ENCODE measurements at regions of chr5 and their contacts with region 1.

Region 1: GRCh38 chr5:43484106-43484849 is 613 bp upstream of the TMEM267 start:
- DNase-seq: peak; percentile 85 to 89 (median 87)
- H3K4me3 ChIP-seq: peak overlapping the region; percentile 50 to 59
- H3K4me3 Mint-ChIP-seq: peak overlapping the region; percentile 96 to 99 (median 98)
- H3K27ac ChIP-seq: peak overlapping the region; percentile 92
- H3K27ac Mint-ChIP-seq: peak overlapping the region; percentile 98 to 100 (median 100)
- H3K4me1 ChIP-seq: peaks cover 40% of the 10 kb centered on the region
- H3K4me1 Mint-ChIP-seq: peaks cover 21 to 57% (median 31%) of the 10 kb centered on the region in 4 donors
- H3K27me3 ChIP-seq: no peaks in the 10 kb centered on the region
- H3K27me3 Mint-ChIP-seq: no peaks in the 10 kb centered on the region

Region 2: GRCh38 chr5:41924872-41925554 is 1559.3 kb before region 1 on chr5 and contains the start of gene FBXO4:
- CTCF ChIA-PET with region 1: interaction called, 3 read pairs
- POLR2A ChIA-PET with region 1: interaction called, 15 read pairs
- intact Hi-C with region 1: no loop called
- DNase-seq: peak; percentile 89 to 93 (median 91)
- H3K4me3 ChIP-seq: peak within 1 kb of the TSS; percentile 83 to 95
- H3K4me3 Mint-ChIP-seq: peak within 1 kb of the TSS; percentile 81 to 91 (median 89)
- H3K27ac ChIP-seq: peak within 1 kb of the TSS; percentile 93
- H3K27ac Mint-ChIP-seq: peak within 1 kb of the TSS; percentile 81 to 100 (median 98)
- H3K4me1 ChIP-seq: peaks cover 25% of the 10 kb centered on the region
- H3K4me1 Mint-ChIP-seq: peaks cover 10 to 33% (median 22%) of the 10 kb centered on the region in 4 donors
- H3K27me3 ChIP-seq: no peaks in the 10 kb centered on the region
- H3K27me3 Mint-ChIP-seq: no peaks in the 10 kb centered on the region
- total RNA-seq, gene FBXO4: 15.1 to 18.2 TPM

Region 3: GRCh38 chr5:43008369-43009153 is 475.7 kb before region 1 on chr5:
- CTCF ChIA-PET with region 1: interaction called, 5 read pairs
- POLR2A ChIA-PET with region 1: interaction called, 41 read pairs
- intact Hi-C with region 1: no loop called
- DNase-seq: peak; percentile 89 to 92 (median 90)
- H3K4me3 ChIP-seq: peak overlapping the region; percentile 66 to 84
- H3K4me3 Mint-ChIP-seq: peak overlapping the region; percentile 84 to 94 (median 91)
- H3K27ac ChIP-seq: peak overlapping the region; percentile 85
- H3K27ac Mint-ChIP-seq: peak overlapping the region; percentile 90 to 99 (median 97)
- H3K4me1 ChIP-seq: peaks cover 38% of the 10 kb centered on the region
- H3K4me1 Mint-ChIP-seq: peaks cover 19 to 48% (median 33%) of the 10 kb centered on the region in 4 donors
- H3K27me3 ChIP-seq: no peaks in the 10 kb centered on the region
- H3K27me3 Mint-ChIP-seq: no peaks in the 10 kb centered on the region

Region 4: GRCh38 chr5:43105369-43106289 is 378.6 kb before region 1 on chr5:
- CTCF ChIA-PET with region 1: interaction called, 15 read pairs
- POLR2A ChIA-PET with region 1: interaction called, 9 read pairs
- intact Hi-C with region 1: loop called (anchors 1 kb)
- DNase-seq: peak; percentile 87 to 90 (median 88)
- H3K4me3 ChIP-seq: peak overlapping the region; percentile 62 to 87
- H3K4me3 Mint-ChIP-seq: peak overlapping the region; percentile 85 to 94 (median 88)
- H3K27ac ChIP-seq: peak overlapping the region; percentile 44
- H3K27ac Mint-ChIP-seq: peak overlapping the region; percentile 84 to 94 (median 92)
- H3K4me1 ChIP-seq: peaks cover 43% of the 10 kb centered on the region
- H3K4me1 Mint-ChIP-seq: peaks cover 28 to 45% (median 37%) of the 10 kb centered on the region in 4 donors
- H3K27me3 ChIP-seq: no peaks in the 10 kb centered on the region
- H3K27me3 Mint-ChIP-seq: no peaks in the 10 kb centered on the region

Region 5: DNA sequence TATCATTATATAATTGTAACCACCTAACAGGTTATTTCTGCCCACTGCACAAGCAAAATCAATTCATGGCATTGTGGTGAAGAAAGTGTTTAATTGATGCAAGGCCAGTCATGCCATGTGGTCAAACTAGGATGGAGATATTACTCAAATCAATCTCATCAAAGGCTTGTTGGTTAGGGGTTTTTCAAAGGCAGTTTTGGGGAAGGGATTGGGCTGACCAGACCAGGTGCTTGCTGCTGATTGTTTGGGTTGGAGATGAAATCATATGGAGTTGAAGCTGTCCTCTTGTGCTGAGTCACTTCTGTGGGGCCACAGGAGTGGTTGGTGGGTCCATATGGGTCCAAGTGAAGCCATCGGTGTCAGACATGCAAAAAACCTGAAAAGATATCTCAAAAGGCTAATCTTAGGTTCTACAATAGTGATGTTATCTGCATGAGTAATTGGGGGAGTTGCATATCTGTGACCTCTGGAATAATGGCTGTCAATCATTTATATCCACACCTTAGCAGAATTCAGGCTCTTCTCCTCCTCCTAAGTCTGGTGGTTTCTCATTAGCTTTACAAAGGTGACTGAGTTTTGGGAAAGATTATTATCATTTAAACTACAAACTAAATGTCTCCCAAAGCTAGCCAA is 216.0 kb before region 1 on chr5:
- CTCF ChIA-PET with region 1: no interaction called
- POLR2A ChIA-PET with region 1: no interaction called
- intact Hi-C with region 1: no loop called
- DNase-seq: no peak
- H3K4me3 ChIP-seq: no peak overlapping the region
- H3K4me3 Mint-ChIP-seq: no peak overlapping the region
- H3K27ac ChIP-seq: no peak overlapping the region
- H3K27ac Mint-ChIP-seq: no peak overlapping the region
- H3K4me1 ChIP-seq: no peaks in the 10 kb centered on the region
- H3K4me1 Mint-ChIP-seq: peaks cover 0 to 5% (median 0%) of the 10 kb centered on the region in 4 donors
- H3K27me3 ChIP-seq: no peaks in the 10 kb centered on the region
- H3K27me3 Mint-ChIP-seq: peaks cover 18 to 25% of the 10 kb centered on the region in 2 donors

Region 6: DNA sequence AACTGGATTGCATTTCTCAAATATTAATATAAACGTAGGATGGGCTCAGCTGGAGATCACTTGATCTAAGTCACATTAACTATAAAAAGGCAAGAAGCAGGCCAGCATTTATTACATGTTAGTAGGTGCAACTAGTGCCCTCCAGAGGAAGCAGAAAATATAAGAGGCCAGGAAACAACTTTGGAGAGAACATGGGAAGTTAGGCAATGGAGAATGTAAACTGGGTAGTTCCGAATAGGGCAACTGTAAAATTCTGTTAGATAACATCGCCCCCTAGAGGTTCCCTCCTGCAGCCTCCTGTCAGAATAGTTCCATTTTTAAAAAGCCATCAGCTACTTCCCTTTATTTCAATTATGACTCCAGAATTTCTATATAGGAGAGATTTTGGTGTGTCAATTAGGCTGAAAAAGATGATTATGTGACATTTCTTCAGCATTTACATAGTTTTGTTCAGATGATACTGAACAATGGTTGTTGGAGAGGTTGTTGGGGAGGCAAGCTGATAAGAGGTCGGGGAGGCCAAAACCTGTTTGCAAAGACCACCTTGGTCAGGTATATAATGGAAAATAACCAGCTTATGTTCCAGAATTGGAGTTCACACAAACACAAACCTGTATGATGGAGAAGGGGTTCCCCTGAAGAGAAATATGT is 94.5 kb before region 1 on chr5:
- CTCF ChIA-PET with region 1: interaction called, 26 read pairs
- POLR2A ChIA-PET with region 1: interaction called, 20 read pairs
- intact Hi-C with region 1: no loop called
- DNase-seq: peak; percentile 45 to 56 (median 53)
- H3K4me3 ChIP-seq: no peak overlapping the region
- H3K4me3 Mint-ChIP-seq: no peak overlapping the region
- H3K27ac ChIP-seq: no peak overlapping the region
- H3K27ac Mint-ChIP-seq: peak overlapping the region in 3 of 7 donors; percentile 0 to 47 (median 31)
- H3K4me1 ChIP-seq: peaks cover 11% of the 10 kb centered on the region
- H3K4me1 Mint-ChIP-seq: peaks cover 6 to 30% (median 21%) of the 10 kb centered on the region in 4 donors
- H3K27me3 ChIP-seq: no peaks in the 10 kb centered on the region
- H3K27me3 Mint-ChIP-seq: no peaks in the 10 kb centered on the region

Region 7: GRCh38 chr5:43497311-43498104 is 13.2 kb after region 1 on chr5:
- CTCF ChIA-PET with region 1: interaction called, 7 read pairs
- POLR2A ChIA-PET with region 1: interaction called, 23 read pairs
- intact Hi-C with region 1: no loop called
- DNase-seq: no peak
- H3K4me3 ChIP-seq: no peak overlapping the region
- H3K4me3 Mint-ChIP-seq: peak overlapping the region; percentile 2 to 83 (median 62)
- H3K27ac ChIP-seq: no peak overlapping the region
- H3K27ac Mint-ChIP-seq: peak overlapping the region in 5 of 7 donors; percentile 38 to 85 (median 55)
- H3K4me1 ChIP-seq: no peaks in the 10 kb centered on the region
- H3K4me1 Mint-ChIP-seq: no peaks in the 10 kb centered on the region
- H3K27me3 ChIP-seq: no peaks in the 10 kb centered on the region
- H3K27me3 Mint-ChIP-seq: no peaks in the 10 kb centered on the region

Region 8: DNA sequence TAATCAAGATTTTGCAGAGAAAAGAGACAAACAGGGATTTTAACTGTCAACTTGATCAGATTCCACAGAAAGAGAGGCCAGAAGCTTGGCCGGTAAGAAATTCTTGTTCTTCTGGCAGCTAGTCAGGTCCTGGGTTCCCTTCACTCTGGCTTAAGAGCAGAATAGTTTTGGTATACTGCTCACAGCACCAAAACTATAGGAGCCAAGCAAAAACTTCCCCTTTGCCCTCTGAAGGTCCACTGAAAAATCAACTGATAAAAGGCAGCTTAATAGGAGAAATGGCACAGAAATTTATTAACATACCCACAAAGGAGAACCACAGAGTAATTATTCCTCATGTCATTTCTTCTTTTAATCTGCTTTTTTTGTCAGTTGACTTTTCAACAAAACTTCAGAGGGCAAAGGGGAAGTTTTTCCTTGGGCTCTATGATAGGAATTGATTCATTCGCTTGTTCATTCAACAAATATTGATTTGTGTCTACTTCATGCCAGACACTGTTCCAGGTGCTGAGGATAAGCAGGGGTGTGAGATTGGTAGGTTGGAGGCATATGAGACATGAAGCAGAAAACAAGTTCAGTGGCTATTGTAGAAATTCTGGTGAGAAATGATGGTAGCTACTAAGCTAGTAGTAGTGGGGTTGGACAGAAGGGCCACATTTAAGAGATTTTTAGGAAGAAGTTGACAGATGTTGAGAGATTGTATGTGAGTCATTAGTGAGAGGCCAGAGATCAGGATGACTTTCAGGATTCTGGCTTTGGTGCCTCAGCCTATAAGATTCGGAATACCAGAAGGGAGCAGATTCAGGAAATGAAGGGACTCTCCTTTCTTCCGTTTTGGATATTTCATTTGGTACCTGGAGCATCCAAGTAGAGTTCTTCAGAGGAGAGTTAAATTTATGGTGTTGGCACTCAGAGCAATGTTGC is 98.1 kb after region 1 on chr5:
- CTCF ChIA-PET with region 1: no interaction called
- POLR2A ChIA-PET with region 1: no interaction called
- intact Hi-C with region 1: no loop called
- DNase-seq: no peak
- H3K4me3 ChIP-seq: no peak overlapping the region
- H3K4me3 Mint-ChIP-seq: no peak overlapping the region
- H3K27ac ChIP-seq: no peak overlapping the region
- H3K27ac Mint-ChIP-seq: peak overlapping the region in 1 of 7 donors; percentile 39
- H3K4me1 ChIP-seq: no peaks in the 10 kb centered on the region
- H3K4me1 Mint-ChIP-seq: no peaks in the 10 kb centered on the region
- H3K27me3 ChIP-seq: no peaks in the 10 kb centered on the region
- H3K27me3 Mint-ChIP-seq: no peaks in the 10 kb centered on the region

Region 9: DNA sequence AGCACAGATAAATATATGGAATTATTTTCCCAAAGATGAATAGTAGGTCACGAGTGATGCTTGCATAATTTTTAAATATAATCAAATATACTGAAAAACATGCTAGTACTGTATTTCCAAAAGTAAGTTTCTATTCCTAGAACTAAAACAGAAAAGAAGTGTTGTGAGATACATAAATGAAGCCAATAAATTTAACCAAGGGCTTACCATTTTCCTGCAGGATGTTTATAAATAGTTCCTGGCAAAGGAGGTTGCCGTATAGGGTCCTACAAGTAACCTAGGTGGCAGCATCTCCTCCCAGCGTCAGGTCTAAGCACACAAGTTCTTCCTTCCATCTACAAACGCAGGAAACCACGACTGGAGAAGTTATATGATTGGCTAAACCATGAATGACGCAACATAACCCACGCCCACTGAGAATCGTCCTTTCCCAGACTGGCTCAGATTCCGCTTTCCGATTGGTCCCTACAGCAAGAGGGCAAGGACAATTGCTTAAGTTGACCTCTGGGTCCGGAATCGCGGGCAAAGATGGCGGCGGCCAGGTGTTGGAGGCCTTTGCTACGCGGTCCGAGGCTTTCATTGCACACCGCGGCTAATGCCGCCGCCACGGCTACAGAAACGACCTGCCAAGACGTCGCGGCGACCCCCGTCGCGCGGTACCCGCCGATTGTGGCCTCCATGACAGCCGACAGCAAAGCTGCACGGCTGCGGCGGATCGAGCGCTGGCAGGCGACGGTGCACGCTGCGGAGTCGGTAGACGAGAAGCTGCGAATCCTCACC is 1324.3 kb after region 1 on chr5 and contains the start of gene MRPS30:
- CTCF ChIA-PET with region 1: no interaction called
- POLR2A ChIA-PET with region 1: interaction called, 12 read pairs
- intact Hi-C with region 1: loop called (anchors 10 kb)
- DNase-seq: peak; percentile 93 to 96 (median 94)
- H3K4me3 ChIP-seq: peak within 1 kb of the TSS; percentile 90 to 91
- H3K4me3 Mint-ChIP-seq: peak within 1 kb of the TSS; percentile 84 to 97 (median 94)
- H3K27ac ChIP-seq: peak within 1 kb of the TSS; percentile 78
- H3K27ac Mint-ChIP-seq: peak within 1 kb of the TSS; percentile 91 to 98 (median 96)
- H3K4me1 ChIP-seq: peaks cover 21% of the 10 kb centered on the region
- H3K4me1 Mint-ChIP-seq: peaks cover 18 to 38% (median 31%) of the 10 kb centered on the region in 4 donors
- H3K27me3 ChIP-seq: no peaks in the 10 kb centered on the region
- H3K27me3 Mint-ChIP-seq: peaks cover 0 to 2% of the 10 kb centered on the region in 2 donors
- total RNA-seq, gene MRPS30: 54.1 to 56.1 TPM

Measured in CD4-positive, alpha-beta memory T cell (primary cell).